BJ (cell line): ENCODE measurements at regions of chr10 and their contacts with region 1.

Region 1: DNA sequence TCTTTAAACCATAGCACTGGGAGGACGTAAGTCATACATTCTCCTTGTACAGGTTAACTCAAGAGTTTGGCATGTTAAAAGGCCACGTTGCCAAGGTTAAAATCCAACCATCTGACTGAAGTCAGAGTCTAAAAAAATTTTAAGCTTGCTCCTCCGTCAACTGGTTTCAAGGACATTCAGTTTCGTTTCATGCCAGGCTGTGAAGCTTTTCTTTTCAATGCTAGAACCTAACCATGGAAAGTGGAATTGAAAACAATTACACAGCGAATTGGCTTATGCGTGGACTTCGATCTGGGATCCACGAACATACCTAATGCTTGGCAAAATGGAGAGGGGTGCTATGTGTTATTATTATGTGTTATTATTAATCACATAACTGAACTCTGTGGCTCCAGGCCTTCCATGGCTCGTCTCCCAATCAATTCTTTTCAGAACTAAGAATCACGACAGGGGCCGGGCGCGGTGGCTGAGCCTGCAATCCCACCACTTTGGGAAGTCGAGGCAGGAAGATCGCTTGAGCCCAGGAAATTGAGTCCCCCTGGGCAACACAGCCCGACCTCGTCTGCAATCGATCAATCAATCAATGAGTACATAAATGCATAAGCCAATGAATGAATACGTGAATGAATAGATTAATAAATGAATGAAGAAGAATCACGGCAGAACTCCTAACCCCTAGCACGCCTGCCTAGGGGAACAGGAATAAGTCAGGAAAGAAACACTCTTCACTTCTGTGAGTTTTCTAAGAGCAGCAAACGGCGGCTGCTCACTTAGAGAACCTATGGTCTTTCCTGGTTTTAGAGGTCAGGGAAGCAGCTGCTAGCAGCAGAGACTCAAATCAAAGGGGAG is 736 bp upstream of the ARL5B start:
- DNase-seq: no peak
- H3K4me3 ChIP-seq: peak overlapping the region; percentile 98
- H3K27me3 ChIP-seq: no peaks in the 10 kb centered on the region
- CTCF ChIP-seq: no peak

Region 2: DNA sequence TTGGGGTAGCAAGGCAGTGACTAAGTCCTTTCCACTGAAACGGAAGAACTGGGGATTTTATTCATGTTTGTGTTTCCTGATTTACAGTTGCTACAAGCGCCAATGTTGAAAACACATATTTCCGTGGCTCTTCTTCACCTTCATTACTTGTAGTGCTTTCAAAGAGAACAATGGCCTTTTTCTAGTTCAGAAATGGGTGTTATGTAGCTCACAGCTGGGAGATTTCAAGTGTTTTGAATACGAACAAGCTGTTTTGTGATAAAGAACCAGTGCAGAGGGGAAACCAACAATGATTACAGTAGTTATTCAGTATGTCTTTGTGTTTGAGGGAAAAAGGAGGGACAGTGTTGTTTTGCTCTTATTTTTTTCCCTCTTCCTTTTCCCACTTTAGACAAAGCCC is 160.5 kb before region 1 on chr10:
- CTCF ChIA-PET with region 1: no interaction called
- POLR2A ChIA-PET with region 1: no interaction called
- DNase-seq: no peak
- H3K4me3 ChIP-seq: no peak overlapping the region
- H3K27me3 ChIP-seq: no peaks in the 10 kb centered on the region
- CTCF ChIP-seq: no peak

Region 3: DNA sequence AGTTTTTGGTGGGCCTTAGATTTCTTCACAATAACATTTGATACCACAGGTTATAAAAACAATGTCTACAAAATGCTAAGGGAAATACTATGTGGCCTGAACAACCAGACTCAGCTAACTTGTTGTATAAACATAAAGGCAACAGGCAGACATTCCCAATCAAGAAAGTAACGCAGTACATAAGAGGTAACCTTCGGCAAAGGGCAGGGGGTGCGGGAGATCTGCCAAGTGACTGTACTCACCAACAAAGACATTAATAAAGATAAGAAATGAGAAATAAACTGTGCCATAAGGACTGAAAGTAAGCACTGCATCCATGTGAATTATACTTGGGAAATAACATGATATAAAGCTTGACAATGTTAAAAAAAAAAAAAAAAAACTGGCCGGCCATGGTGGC is 22.5 kb before region 1 on chr10:
- CTCF ChIA-PET with region 1: no interaction called
- POLR2A ChIA-PET with region 1: interaction called, 13 read pairs
- DNase-seq: no peak
- H3K4me3 ChIP-seq: no peak overlapping the region
- H3K27me3 ChIP-seq: no peaks in the 10 kb centered on the region
- CTCF ChIP-seq: no peak

Region 4: GRCh38 chr10:18675086-18675801 is 16.7 kb after region 1 on chr10:
- CTCF ChIA-PET with region 1: no interaction called
- POLR2A ChIA-PET with region 1: no interaction called
- DNase-seq: no peak
- H3K4me3 ChIP-seq: no peak overlapping the region
- H3K27me3 ChIP-seq: no peaks in the 10 kb centered on the region
- CTCF ChIP-seq: no peak

Region 5: GRCh38 chr10:18777258-18777657 is 118.8 kb after region 1 on chr10:
- CTCF ChIA-PET with region 1: no interaction called
- POLR2A ChIA-PET with region 1: no interaction called
- DNase-seq: no peak
- H3K4me3 ChIP-seq: no peak overlapping the region
- H3K27me3 ChIP-seq: no peaks in the 10 kb centered on the region
- CTCF ChIP-seq: no peak